Activated CD4-positive, alpha-beta T cell treated with anti-CD3 and anti-CD28 coated beads, Interleukin-2, amount 10 ng/mL, durations not matched to agents 24 days and 14 days (primary cell): ENCODE measurements at regions of chr9 and their contacts with region 1.

Region 1: DNA sequence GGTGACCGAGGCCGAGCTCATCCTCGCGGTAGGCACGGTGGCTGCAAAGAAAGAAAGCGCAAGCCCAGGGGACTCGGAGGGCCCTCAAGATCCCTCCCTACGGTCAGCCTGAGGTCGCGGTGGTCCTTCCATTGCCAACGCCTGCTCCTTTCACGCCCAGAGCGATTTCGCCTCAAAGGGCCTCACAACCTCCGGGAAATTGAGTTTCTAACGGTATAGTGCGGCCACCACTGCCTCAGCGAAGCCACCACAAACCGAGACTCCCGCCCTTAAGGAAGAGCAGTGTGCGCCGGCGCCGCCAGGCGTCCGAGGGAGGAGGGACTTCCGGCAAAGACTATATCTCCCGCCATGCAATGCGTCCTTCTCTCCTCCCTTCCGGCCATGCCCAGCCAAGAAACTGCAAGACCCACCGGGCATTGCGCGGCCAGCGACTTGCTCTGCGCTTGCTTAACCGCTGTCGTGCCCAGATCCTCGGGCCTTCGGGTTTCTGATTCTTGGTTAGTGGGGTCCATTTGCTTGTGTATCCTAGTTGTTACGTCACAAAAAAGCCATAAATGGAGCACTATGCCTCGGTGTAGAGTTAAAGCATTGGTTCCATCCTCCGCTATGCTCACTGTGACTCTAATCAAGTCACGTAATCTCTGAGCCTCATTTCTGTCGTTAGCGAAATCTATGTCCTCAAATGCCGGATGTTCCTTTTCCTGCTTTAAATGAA is at the start of gene HAUS6:
- DNase-seq: peak; percentile 98
- H3K4me3 Mint-ChIP-seq: peak within 1 kb of the TSS; percentile 87
- H3K27ac Mint-ChIP-seq: peak within 1 kb of the TSS; percentile 93
- H3K4me1 Mint-ChIP-seq: peaks cover 19% of the 10 kb centered on the region
- H3K27me3 Mint-ChIP-seq: no peaks in the 10 kb centered on the region
- total RNA-seq, gene HAUS6: 32.2 and 34.3 TPM in 2 replicates

Region 2: GRCh38 chr9:17660158-17660557 is 1442.6 kb before region 1 on chr9:
- intact Hi-C with region 1: no loop called
- DNase-seq: no peak
- H3K4me3 Mint-ChIP-seq: no peak overlapping the region
- H3K27ac Mint-ChIP-seq: no peak overlapping the region
- H3K4me1 Mint-ChIP-seq: no peaks in the 10 kb centered on the region
- H3K27me3 Mint-ChIP-seq: no peaks in the 10 kb centered on the region

Region 3: DNA sequence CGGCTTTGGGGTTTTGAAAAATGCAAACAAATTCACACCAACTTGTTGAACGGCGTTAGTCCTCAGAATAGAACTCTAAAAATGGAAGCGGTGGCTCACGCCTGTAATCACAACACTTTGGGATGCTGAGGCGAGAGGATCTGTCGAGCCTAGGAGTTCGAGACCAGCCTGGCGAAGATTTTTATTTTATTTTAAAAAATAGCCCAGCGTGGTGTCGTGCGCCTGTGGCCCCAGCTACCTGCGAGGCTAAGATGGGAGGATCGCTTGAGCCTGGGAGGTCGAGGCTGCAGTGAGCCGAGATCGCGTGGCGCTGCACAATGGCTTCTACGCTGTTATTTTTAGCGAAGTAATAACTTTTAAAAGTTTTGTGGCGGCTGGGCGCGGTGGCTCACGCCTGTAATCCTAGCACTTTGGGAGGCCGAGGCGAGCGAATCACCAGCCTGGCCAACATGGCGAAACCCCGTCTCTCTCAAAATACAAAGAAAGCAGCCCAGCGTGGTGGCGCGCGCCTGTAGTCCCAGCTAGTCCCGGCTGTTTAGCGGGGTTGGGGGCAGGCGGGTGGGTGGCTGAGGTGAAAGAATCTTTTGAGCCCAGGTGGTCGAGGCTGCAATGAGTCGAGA is 25.2 kb after region 1 on chr9:
- intact Hi-C with region 1: loop called (anchors 1 kb)
- DNase-seq: peak; percentile 80
- H3K4me3 Mint-ChIP-seq: peak overlapping the region; percentile 90
- H3K27ac Mint-ChIP-seq: peak overlapping the region; percentile 95
- H3K4me1 Mint-ChIP-seq: peaks cover 46% of the 10 kb centered on the region
- H3K27me3 Mint-ChIP-seq: no peaks in the 10 kb centered on the region

Region 4: GRCh38 chr9:19174127-19174912 is 71.5 kb after region 1 on chr9:
- intact Hi-C with region 1: loop called (anchors 1 kb)
- DNase-seq: peak; percentile 80
- H3K4me3 Mint-ChIP-seq: peak overlapping the region; percentile 22
- H3K27ac Mint-ChIP-seq: peak overlapping the region; percentile 34
- H3K4me1 Mint-ChIP-seq: peaks cover 21% of the 10 kb centered on the region
- H3K27me3 Mint-ChIP-seq: no peaks in the 10 kb centered on the region

Region 5: GRCh38 chr9:19408693-19409400 is 306.1 kb after region 1 on chr9 and contains the start of gene ACER2:
- intact Hi-C with region 1: loop called (anchors 1 kb)
- DNase-seq: peak; percentile 99
- H3K4me3 Mint-ChIP-seq: peak within 1 kb of the TSS; percentile 93
- H3K27ac Mint-ChIP-seq: peak within 1 kb of the TSS; percentile 81
- H3K4me1 Mint-ChIP-seq: peaks cover 12% of the 10 kb centered on the region
- H3K27me3 Mint-ChIP-seq: peaks cover 4% of the 10 kb centered on the region
- total RNA-seq, gene ACER2: 0.96 and 1.3 TPM in 2 replicates